Activated B cell treated with CpG ODN at 0.5 μM for 24 hours (primary cell): ENCODE measurements at regions of chr17 and their contacts with region 1.

Region 1: DNA sequence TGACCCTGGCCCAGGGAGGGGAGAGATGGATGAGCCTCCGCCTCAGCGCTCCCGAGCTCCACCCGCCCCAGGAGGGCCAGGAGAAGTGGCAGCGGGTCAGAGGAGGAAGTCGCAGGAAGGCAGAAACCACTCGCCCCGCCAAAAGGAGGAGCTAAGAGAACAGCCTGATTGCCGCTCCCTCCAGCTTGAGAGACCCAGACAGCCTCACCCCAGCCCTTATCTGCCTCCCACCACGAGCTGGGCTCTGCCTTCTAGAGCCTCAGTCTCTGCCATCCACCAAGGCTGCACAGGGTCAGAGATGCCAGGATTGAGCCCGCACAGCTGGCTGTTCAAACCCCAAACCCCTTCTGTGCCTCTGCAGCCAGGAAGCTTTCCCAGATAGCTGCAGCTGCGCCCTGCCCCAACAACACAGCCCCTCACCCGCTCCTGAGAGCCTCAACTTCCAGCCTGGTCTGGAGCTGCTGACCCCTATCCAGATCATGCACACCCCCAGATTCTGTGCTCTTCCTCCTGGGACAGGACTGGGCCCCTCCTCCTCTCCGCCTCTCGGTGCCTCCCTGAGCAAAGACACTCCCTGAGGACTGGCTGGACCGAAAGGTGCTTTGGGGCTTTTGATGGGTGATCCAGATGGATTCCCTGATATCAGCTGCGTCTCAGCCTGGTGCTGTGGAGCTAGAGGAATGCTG is 1.0 kb upstream of the ATP2A3 start:
- DNase-seq: peak; percentile 64
- ATAC-seq: peak; percentile 49
- H3K4me3 Mint-ChIP-seq: peak overlapping the region; percentile 87
- H3K27ac Mint-ChIP-seq: peak overlapping the region; percentile 94
- H3K4me1 Mint-ChIP-seq: peaks cover 77% of the 10 kb centered on the region
- H3K27me3 Mint-ChIP-seq: no peaks in the 10 kb centered on the region
- CTCF ChIP-seq: no peak

Region 2: DNA sequence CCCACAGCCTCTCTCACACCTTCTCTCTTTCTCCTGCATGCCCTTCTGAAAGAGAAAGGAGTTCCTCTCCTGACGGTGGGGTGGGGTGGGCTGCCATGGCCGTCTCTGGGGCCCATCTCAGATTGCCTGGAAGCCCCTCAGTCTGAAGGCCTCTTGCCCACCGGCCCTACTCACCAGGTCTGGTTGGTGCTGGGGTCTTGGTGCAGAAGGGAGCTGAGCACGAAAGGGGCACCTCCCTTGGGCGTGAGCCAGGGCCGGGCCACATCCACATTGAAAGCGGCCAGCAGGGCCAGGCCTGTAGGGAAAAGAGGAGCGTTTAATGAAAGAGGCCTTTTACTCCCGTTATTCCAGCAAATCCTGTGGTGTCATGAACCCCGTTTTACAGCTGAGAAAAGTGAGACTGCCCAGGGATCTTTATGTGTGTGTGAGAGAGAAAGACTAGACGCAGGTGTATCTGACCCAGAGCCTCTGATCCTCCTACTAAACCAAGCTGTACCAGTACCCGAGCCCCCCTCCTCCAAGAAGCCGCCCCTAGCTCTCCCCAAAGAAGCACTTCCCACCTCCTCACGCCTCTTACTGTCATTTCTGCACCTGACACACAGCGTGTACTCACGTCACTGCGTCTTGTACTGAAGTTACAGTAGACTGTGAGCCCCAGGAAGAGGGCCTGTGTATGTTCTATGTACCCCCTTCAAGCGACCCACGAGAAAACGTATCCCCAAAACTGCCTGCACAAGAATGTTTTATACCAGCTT is 187.7 kb before region 1 on chr17:
- CTCF ChIA-PET with region 1: no interaction called
- POLR2A ChIA-PET with region 1: no interaction called
- intact Hi-C with region 1: no loop called
- DNase-seq: no peak
- ATAC-seq: no peak
- H3K4me3 Mint-ChIP-seq: no peak overlapping the region
- H3K27ac Mint-ChIP-seq: no peak overlapping the region
- H3K4me1 Mint-ChIP-seq: no peaks in the 10 kb centered on the region
- H3K27me3 Mint-ChIP-seq: no peaks in the 10 kb centered on the region
- CTCF ChIP-seq: no peak

Region 3: GRCh38 chr17:3804503-3804931 is 160.7 kb before region 1 on chr17:
- CTCF ChIA-PET with region 1: no interaction called
- POLR2A ChIA-PET with region 1: no interaction called
- intact Hi-C with region 1: no loop called
- DNase-seq: no peak
- ATAC-seq: peak; percentile 92
- H3K4me3 Mint-ChIP-seq: peak overlapping the region; percentile 69
- H3K27ac Mint-ChIP-seq: peak overlapping the region; percentile 86
- H3K4me1 Mint-ChIP-seq: peaks cover 45% of the 10 kb centered on the region
- H3K27me3 Mint-ChIP-seq: no peaks in the 10 kb centered on the region
- CTCF ChIP-seq: no peak

Region 4: GRCh38 chr17:3893003-3893719 is 72.1 kb before region 1 on chr17 and contains the start of gene CAMKK1:
- CTCF ChIA-PET with region 1: no interaction called
- POLR2A ChIA-PET with region 1: interaction called, 8 read pairs
- intact Hi-C with region 1: loop called (anchors 1 kb)
- DNase-seq: peak; percentile 93
- ATAC-seq: peak; percentile 88
- H3K4me3 Mint-ChIP-seq: peak within 1 kb of the TSS; percentile 81
- H3K27ac Mint-ChIP-seq: peak within 1 kb of the TSS; percentile 77
- H3K4me1 Mint-ChIP-seq: peaks cover 38% of the 10 kb centered on the region
- H3K27me3 Mint-ChIP-seq: no peaks in the 10 kb centered on the region
- CTCF ChIP-seq: no peak
- total RNA-seq, gene CAMKK1: 4.3 and 6.1 TPM in 2 replicates

Region 5: GRCh38 chr17:3907483-3908216 is 57.6 kb before region 1 on chr17:
- CTCF ChIA-PET with region 1: interaction called, 72 read pairs
- POLR2A ChIA-PET with region 1: interaction called, 311 read pairs
- intact Hi-C with region 1: no loop called
- DNase-seq: no peak
- ATAC-seq: no peak
- H3K4me3 Mint-ChIP-seq: no peak overlapping the region
- H3K27ac Mint-ChIP-seq: peak overlapping the region; percentile 64
- H3K4me1 Mint-ChIP-seq: peaks cover 65% of the 10 kb centered on the region
- H3K27me3 Mint-ChIP-seq: no peaks in the 10 kb centered on the region
- CTCF ChIP-seq: no peak

Region 6: DNA sequence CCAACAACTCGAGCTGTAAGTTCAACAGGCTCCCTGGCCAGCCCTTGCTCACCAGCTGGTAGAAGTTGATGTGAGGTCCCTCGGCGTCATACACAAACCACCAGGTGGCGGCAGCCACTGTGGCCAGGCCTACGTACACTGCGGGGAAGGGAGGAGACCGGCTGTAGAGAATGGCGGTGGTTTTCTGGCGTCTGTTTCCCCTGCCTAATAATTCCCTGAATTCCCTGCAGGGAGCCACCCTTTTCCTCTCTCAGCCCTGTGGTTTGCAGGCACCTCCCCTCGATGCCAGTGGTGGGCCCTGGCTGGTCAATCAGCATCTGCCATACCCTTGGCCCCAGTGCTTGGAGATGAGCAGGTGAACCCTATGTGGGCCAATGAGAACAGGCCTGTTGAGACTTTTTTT is 30.1 kb before region 1 on chr17:
- CTCF ChIA-PET with region 1: interaction called, 4 read pairs
- POLR2A ChIA-PET with region 1: interaction called, 5 read pairs
- intact Hi-C with region 1: loop called (anchors 1 kb)
- DNase-seq: no peak
- ATAC-seq: peak; percentile 84
- H3K4me3 Mint-ChIP-seq: no peak overlapping the region
- H3K27ac Mint-ChIP-seq: peak overlapping the region; percentile 59
- H3K4me1 Mint-ChIP-seq: no peaks in the 10 kb centered on the region
- H3K27me3 Mint-ChIP-seq: no peaks in the 10 kb centered on the region
- CTCF ChIP-seq: no peak

Region 7: GRCh38 chr17:4004517-4005295 is 39.4 kb after region 1 on chr17:
- CTCF ChIA-PET with region 1: interaction called, 18 read pairs
- POLR2A ChIA-PET with region 1: interaction called, 17 read pairs
- intact Hi-C with region 1: loop called (anchors 1 kb)
- DNase-seq: peak; percentile 77
- ATAC-seq: peak; percentile 80
- H3K4me3 Mint-ChIP-seq: peak overlapping the region; percentile 38
- H3K27ac Mint-ChIP-seq: no peak overlapping the region
- H3K4me1 Mint-ChIP-seq: peaks cover 24% of the 10 kb centered on the region
- H3K27me3 Mint-ChIP-seq: no peaks in the 10 kb centered on the region
- CTCF ChIP-seq: peak; percentile 96

Region 8: DNA sequence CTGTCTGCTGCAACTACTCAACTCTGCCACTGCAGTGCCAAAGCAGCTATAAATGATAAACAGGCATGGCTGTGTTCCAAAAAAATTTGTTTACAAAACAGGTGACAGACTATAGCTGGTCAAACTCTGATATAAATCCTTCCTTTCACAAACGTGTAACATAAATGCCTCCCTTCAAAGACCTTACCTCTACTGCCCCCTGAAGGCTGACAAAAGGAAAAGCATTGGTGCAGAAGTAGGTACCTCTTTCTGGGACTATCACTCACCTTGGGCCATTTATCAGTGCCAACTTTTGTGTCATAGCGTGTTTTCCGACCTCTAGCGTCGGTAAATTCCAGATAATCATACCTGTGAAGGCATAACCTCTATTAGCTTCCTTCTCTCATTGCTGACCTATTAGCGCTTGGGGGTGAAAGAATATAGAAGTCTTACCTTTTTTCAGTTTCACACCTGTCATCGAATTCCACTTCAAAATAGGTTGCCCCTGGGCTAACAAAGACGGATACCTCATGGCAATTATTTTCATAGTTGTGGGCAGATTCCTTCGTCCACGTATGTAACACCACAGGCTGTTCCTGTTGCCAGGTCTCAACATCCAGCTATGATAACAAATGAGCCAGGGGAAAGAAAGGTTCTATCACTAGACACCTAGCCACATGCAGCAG is 109.7 kb after region 1 on chr17:
- CTCF ChIA-PET with region 1: no interaction called
- POLR2A ChIA-PET with region 1: interaction called, 12 read pairs
- intact Hi-C with region 1: loop called (anchors 5 kb)
- DNase-seq: no peak
- ATAC-seq: peak; percentile 53
- H3K4me3 Mint-ChIP-seq: peak overlapping the region; percentile 76
- H3K27ac Mint-ChIP-seq: peak overlapping the region; percentile 84
- H3K4me1 Mint-ChIP-seq: peaks cover 18% of the 10 kb centered on the region
- H3K27me3 Mint-ChIP-seq: no peaks in the 10 kb centered on the region
- CTCF ChIP-seq: no peak

Region 9: DNA sequence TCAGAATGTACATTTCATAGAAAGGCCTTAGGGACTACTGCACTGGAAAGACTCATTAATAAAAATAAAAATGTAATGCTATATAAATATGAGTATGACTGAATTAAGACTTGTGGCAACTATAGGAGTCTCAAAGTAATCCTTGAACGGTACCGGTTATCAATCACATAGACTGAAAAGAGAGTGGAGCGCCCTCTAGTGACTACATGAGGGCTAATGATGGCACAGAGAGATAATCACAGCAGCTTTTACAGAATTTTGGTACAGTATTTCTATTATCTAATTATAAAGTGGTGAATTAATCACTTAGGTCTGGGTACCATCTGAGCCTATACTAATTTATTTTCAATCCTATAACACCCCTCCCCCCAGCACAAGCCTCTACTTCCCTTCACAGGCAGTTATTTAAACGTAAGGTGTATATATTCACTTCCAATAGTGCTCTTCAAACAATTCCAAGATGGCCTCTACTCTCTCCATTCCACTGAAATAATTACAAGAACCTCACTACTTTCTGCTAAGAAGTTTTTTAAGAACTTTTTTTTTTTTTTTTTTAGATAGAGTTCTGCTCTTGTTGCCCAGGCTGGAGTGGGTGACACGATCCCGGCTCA is 339.3 kb after region 1 on chr17:
- CTCF ChIA-PET with region 1: no interaction called
- POLR2A ChIA-PET with region 1: no interaction called
- intact Hi-C with region 1: no loop called
- DNase-seq: no peak
- ATAC-seq: peak; percentile 81
- H3K4me3 Mint-ChIP-seq: no peak overlapping the region
- H3K27ac Mint-ChIP-seq: no peak overlapping the region
- H3K4me1 Mint-ChIP-seq: peaks cover 20% of the 10 kb centered on the region
- H3K27me3 Mint-ChIP-seq: no peaks in the 10 kb centered on the region
- CTCF ChIP-seq: peak; percentile 53